Psoas muscle (tissue), 8 donors: ENCODE measurements at regions of chr15 and their contacts with region 1.

Region 1: GRCh38 chr15:34927726-34928125 is 41.8 kb downstream of the AQR start:
- DNase-seq: no peak
- ATAC-seq: no peak
- H3K4me3 ChIP-seq: no peak overlapping the region
- H3K27ac ChIP-seq: no peak overlapping the region
- H3K4me1 ChIP-seq: no peaks in the 10 kb centered on the region
- H3K27me3 ChIP-seq: no peaks in the 10 kb centered on the region
- CTCF ChIP-seq: no peak

Region 2: DNA sequence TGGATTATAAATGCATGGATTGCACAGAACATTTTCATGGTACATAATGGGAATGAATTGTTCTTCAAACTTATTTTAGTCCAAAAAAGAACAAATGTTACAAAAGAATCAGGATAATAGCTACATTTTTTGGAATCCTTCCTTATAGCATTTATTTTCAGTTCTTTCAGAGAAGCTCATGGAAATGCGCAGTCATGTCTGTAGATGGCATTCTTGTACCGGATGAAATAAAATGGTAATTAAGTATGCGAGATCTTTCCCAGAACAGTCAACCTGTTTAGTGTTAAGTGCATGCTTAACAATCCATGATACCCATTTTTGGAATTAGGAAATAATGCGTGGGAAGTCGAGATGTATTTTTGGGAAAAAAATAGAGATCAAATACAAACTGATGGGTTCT is 306.1 kb before region 1 on chr15:
- intact Hi-C with region 1: loop called in 1 of 2 experiments (anchors 5 kb)
- DNase-seq: no peak
- ATAC-seq: peak in 1 of 4 donors; percentile 51
- H3K4me3 ChIP-seq: no peak overlapping the region
- H3K27ac ChIP-seq: no peak overlapping the region
- H3K4me1 ChIP-seq: no peaks in the 10 kb centered on the region
- H3K27me3 ChIP-seq: no peaks in the 10 kb centered on the region
- CTCF ChIP-seq: peak; percentile 49

Region 3: DNA sequence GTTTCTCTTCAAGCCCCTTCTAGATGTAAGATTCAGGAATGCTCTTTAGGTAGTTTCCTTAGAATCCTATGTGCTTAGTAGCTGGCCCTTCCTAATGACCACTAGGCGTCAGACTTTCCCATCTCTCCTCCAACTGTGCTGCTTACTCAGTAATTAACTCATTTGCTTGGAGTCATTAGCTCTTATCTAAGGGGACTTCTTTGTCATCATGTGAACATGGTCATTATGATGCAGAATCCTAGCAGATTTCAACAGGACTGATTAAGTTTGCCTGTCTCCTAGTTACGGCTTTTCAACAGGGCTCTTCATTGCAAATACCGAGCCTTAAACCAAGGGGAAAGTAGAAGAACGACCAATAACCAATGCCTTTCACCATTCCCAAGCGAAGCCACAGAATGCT is 219.3 kb before region 1 on chr15:
- intact Hi-C with region 1: loop called in 1 of 2 experiments (anchors 5 kb)
- DNase-seq: no peak
- ATAC-seq: peak; percentile 68 to 92 (median 78)
- H3K4me3 ChIP-seq: no peak overlapping the region
- H3K27ac ChIP-seq: no peak overlapping the region
- H3K4me1 ChIP-seq: no peaks in the 10 kb centered on the region
- H3K27me3 ChIP-seq: no peaks in the 10 kb centered on the region
- CTCF ChIP-seq: peak; percentile 75